PC-9 (cell line): ENCODE measurements at regions of chrX and their contacts with region 1.

Region 1: DNA sequence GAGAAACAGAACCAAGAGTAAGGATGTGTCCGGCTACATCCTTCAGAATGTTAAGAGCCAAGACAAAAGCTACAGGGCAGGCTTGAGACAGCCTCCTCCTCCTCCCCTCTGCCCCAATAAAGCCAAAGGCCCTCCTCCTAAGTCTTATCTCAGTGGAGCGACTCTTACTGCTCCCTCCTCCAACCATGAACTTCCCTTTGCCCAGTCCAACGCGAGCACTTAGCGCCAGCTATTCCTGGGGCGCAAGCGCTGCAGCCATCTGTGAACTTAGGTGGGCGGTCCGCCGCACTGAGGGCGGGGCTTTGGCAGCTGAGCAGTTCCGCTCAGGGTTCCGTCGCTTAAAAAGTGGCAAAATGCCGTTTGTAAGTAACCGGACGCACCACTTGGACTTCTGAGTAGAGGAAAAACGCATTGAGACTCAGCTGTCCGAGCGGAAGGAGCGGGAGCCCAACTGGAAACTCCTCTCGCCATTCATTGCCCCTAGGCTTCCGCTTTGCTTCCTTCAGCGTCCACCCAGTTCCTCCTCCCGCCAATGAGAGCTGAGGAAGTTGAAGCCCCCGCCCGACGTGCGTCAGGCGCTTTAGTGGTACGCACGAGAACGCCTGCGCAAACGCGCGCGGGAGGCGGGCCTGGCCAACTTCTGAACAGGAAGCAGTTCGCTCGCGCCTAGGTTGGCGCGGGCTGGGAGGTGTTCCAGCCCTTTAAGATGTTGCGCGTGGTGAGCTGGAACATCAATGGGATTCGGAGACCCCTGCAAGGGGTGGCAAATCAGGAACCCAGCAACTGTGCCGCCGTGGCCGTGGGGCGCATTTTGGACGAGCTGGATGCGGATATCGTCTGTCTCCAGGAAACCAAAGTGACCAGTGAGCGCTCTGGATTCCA is at the start of gene APEX2:
- DNase-seq: peak; percentile 89 to 92
- H3K4me3 ChIP-seq: peak within 1 kb of the TSS; percentile 74
- H3K27ac ChIP-seq: peak within 1 kb of the TSS; percentile 85
- H3K4me1 ChIP-seq: peaks cover 42% of the 10 kb centered on the region
- H3K27me3 ChIP-seq: no peaks in the 10 kb centered on the region
- CTCF ChIP-seq: no peak
- total RNA-seq, gene APEX2: 48.0 and 57.7 TPM in 2 replicates

Region 2: GRCh38 chrX:54808605-54809483 is 191.1 kb before region 1 on chrX:
- CTCF ChIA-PET with region 1: no interaction called
- POLR2A ChIA-PET with region 1: no interaction called
- intact Hi-C with region 1: loop called (anchors 5 kb)
- DNase-seq: peak; percentile 84 to 97
- H3K4me3 ChIP-seq: peak overlapping the region; percentile 86
- H3K27ac ChIP-seq: no peak overlapping the region
- H3K4me1 ChIP-seq: peaks cover 8% of the 10 kb centered on the region; the same call in 1 of the 2 replicates
- H3K27me3 ChIP-seq: peaks cover 9% of the 10 kb centered on the region; the same call in 1 of the 2 replicates
- CTCF ChIP-seq: no peak

Region 3: GRCh38 chrX:55057675-55058249 is 57.8 kb after region 1 on chrX:
- CTCF ChIA-PET with region 1: no interaction called
- POLR2A ChIA-PET with region 1: no interaction called
- intact Hi-C with region 1: loop called (anchors 2 kb)
- DNase-seq: peak in 1 of 2 experiments; percentile 12
- H3K4me3 ChIP-seq: no peak overlapping the region
- H3K27ac ChIP-seq: no peak overlapping the region
- H3K4me1 ChIP-seq: no peaks in the 10 kb centered on the region
- H3K27me3 ChIP-seq: no peaks in the 10 kb centered on the region
- CTCF ChIP-seq: peak; percentile 87

Region 4: DNA sequence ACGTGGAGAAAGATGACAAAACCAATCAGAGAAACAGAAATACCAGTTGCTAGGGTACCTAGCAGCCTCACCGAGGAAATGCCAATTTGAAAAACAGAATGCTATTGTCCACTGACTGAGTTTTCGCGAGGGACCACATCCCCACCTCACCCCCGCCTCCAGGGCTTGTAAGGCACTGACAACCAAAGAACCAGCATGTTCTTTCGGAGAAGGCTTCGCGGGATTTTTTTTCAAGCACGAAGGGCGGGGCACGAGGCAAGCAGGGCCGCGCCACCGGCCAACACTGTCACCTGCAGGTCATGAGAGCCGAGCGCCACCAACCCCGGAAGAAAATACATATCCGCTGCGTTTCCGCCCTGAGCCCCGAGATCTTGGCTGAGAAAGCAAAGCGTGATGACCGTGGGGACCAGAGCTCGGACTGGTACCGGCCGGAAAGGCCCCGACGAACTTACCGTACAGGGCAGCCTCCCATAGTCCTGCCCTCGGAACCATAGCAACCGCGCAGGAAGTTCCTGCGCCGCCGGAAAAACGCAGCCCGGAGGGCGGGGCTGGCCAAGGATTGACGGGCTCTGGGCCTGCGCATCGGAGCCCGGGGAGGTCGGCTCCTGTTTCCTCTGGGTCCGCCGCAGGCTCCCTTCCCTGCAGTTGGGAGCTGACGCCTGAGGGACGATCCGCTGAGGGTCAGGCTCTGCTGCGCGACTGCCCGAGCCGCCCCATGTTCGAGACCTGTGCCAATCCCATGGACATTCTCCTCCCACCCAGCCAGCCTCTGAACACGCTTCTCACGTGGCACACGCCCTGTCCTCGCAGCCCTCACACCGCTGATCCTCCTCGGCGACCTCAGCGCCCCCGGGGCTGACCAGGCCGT is 161.0 kb after region 1 on chrX:
- CTCF ChIA-PET with region 1: no interaction called
- POLR2A ChIA-PET with region 1: no interaction called
- intact Hi-C with region 1: loop called (anchors 10 kb)
- DNase-seq: peak; percentile 79 to 91
- H3K4me3 ChIP-seq: peak overlapping the region; percentile 70
- H3K27ac ChIP-seq: peak overlapping the region; percentile 61
- H3K4me1 ChIP-seq: peaks cover 20% of the 10 kb centered on the region
- H3K27me3 ChIP-seq: no peaks in the 10 kb centered on the region
- CTCF ChIP-seq: peak; percentile 44; the same call in 1 of the 2 replicates